ENCODE measurements at regions of chr22 and their contacts with region 1.

Region 1: GRCh38 chr22:43346521-43346929 is 3.4 kb upstream of the SCUBE1 start:
- DNase-seq: peak; percentile 75
- H3K4me3 Mint-ChIP-seq: no peak overlapping the region
- H3K27ac Mint-ChIP-seq: no peak overlapping the region
- H3K4me1 Mint-ChIP-seq: peaks cover 12% of the 10 kb centered on the region
- H3K27me3 Mint-ChIP-seq: peaks cover 44% of the 10 kb centered on the region

Region 2: DNA sequence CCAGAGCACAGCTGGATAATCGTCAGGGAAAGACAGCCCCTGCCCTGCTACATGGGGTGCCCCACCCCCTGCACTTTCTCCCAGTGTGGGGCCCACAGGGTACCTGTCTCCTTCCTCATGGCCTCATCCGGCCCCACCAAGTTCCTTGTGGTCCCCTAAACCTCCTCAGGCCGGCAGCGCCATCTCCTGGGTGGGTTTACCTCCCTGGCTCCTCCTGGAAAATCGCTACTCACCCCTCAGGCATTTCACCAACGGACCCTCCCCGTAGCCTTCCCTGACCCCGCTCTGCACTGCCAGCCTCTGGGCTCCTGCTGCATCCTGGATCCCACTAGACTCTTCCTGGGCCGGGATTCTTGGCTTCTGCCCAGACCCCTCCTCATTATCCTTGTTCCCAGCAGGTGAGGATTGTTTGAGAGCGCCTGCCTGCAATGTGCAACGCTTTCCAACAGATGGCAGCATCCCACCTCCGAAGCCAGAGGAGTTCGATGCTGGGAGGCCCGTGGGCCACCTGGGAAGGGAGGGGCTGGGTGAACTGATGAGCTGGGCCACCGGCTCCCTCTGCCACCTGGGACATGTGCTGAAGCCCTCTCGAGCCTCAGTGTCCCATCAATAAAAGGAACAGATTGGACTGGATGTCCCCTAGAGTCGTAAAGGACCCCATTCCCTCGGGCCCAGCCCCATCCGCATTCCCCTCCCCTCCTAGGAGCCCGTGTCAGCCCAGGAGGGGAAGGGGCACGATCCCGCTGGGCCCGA is 115.4 kb before region 1 on chr22:
- CTCF ChIA-PET with region 1: interaction called, 119 read pairs
- POLR2A ChIA-PET with region 1: no interaction called
- intact Hi-C with region 1: loop called (anchors 1 kb)
- DNase-seq: peak; percentile 75
- H3K4me3 Mint-ChIP-seq: no peak overlapping the region
- H3K27ac Mint-ChIP-seq: no peak overlapping the region
- H3K4me1 Mint-ChIP-seq: peaks cover 2% of the 10 kb centered on the region
- H3K27me3 Mint-ChIP-seq: no peaks in the 10 kb centered on the region

Region 3: GRCh38 chr22:43273902-43274484 is 72.5 kb before region 1 on chr22:
- CTCF ChIA-PET with region 1: interaction called, 156 read pairs
- POLR2A ChIA-PET with region 1: no interaction called
- intact Hi-C with region 1: loop called (anchors 1 kb)
- DNase-seq: peak; percentile 59
- H3K4me3 Mint-ChIP-seq: no peak overlapping the region
- H3K27ac Mint-ChIP-seq: no peak overlapping the region
- H3K4me1 Mint-ChIP-seq: no peaks in the 10 kb centered on the region
- H3K27me3 Mint-ChIP-seq: peaks cover 3% of the 10 kb centered on the region

Region 4: GRCh38 chr22:43356881-43357280 is 10.4 kb after region 1 on chr22:
- CTCF ChIA-PET with region 1: interaction called, 14 read pairs
- POLR2A ChIA-PET with region 1: no interaction called
- intact Hi-C with region 1: no loop called
- DNase-seq: no peak
- H3K4me3 Mint-ChIP-seq: no peak overlapping the region
- H3K27ac Mint-ChIP-seq: no peak overlapping the region
- H3K4me1 Mint-ChIP-seq: no peaks in the 10 kb centered on the region
- H3K27me3 Mint-ChIP-seq: peaks cover 4% of the 10 kb centered on the region

Region 5: DNA sequence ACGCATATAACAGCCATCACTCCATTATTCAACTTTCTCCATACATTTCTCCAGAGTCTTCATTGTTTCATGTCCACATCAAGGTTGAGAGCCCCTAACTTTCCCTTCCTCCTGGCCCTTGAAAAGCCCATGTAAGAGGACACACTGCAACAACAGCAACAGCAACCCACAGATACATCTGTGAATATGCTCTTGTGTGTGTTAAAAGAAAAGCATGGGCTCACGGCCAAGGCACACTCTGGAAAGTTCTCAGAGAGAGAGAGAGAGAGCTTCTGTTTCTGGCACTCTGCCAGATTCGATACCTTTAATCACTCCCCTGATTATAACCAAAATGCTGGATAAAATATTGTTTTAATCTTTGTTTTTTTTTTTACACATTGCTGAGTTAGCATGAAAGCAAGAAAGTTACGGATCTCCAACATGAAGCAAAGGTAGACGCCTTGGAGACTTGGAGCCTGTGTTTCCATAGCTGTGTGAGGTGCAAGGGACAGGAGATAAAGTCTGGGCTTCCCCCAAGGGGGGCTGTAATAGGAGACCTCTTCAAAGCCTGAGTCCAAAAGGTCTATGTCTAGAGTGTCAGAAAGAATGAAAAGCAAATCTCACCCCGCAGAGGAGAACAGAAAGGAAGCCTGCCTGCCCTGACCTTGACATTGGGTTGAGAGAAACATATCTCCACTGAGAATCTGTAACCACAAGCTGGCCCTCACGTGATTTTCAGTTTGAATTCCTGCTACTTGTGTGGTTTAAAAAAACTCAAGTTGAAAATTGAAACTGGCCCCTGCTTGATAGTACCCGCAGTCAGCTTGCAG is 31.6 kb after region 1 on chr22:
- CTCF ChIA-PET with region 1: interaction called, 12 read pairs
- POLR2A ChIA-PET with region 1: no interaction called
- intact Hi-C with region 1: no loop called
- DNase-seq: peak; percentile 19
- H3K4me3 Mint-ChIP-seq: no peak overlapping the region
- H3K27ac Mint-ChIP-seq: no peak overlapping the region
- H3K4me1 Mint-ChIP-seq: peaks cover 9% of the 10 kb centered on the region
- H3K27me3 Mint-ChIP-seq: peaks cover 26% of the 10 kb centered on the region

Measured in activated CD4-positive, alpha-beta memory T cell treated with anti-CD3 and anti-CD28 coated beads for 36 hours (primary cell).